HCT116 (cell line): ENCODE measurements at regions of chr17 and their contacts with region 1.

Region 1: DNA sequence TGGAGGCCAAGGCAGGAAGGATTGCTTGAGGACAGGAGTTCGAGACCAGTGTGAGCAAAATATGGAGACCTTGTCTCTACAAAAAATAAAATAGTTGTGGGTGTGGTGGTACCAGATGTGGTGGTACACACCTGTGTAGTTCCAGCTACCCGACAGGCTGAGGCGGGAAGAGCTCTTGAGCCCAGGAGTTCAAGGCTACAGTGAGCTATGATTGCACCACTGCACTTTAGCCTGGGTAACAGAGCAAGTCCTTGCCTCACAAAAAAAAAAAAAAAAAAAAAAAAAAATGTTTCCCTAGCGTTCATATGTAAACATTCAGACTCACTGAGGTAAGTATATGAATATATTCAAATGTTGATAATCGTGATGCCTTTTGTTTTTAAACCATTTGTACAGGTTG is 39.5 kb downstream of the CLUH start:
- DNase-seq: no peak
- ATAC-seq: no peak
- H3K4me3 ChIP-seq: no peak overlapping the region
- H3K27ac ChIP-seq: no peak overlapping the region
- H3K4me1 ChIP-seq: no peaks in the 10 kb centered on the region
- H3K27me3 ChIP-seq: no peaks in the 10 kb centered on the region
- CTCF ChIP-seq: no peak
- POLR2A ChIP-seq: no peak
- RAD21 ChIP-seq: no peak

Region 2: DNA sequence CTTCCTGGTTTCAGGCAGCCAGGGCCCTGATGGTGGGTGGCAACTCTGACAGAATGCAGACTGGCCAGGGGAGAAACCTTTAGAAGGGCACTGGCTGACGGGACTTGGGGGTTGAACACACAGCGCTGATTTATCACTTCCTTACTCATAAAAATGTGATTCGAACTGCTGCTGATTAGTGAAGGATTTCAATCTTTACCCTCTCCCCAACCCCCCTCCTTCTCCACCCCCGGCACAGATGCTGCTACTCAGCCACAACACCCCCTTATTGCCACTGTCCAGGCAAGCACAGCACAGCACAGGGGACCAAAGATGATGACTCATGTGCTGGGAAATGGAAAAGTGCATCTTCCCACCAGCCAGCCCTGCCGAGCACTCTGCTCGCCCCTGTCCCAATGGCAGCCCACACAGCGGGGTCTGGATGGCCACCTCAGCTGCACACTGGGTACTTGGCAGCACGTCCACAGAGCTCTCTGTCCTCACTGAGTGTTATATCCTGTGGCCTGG is 438.5 kb before region 1 on chr17:
- CTCF ChIA-PET with region 1: no interaction called
- POLR2A ChIA-PET with region 1: no interaction called
- RAD21 ChIA-PET with region 1: no interaction called
- intact Hi-C with region 1: no loop called
- DNase-seq: no peak
- ATAC-seq: no peak
- H3K4me3 ChIP-seq: no peak overlapping the region
- H3K27ac ChIP-seq: no peak overlapping the region
- H3K4me1 ChIP-seq: no peaks in the 10 kb centered on the region
- H3K27me3 ChIP-seq: no peaks in the 10 kb centered on the region
- CTCF ChIP-seq: no peak
- POLR2A ChIP-seq: no peak
- RAD21 ChIP-seq: no peak

Region 3: DNA sequence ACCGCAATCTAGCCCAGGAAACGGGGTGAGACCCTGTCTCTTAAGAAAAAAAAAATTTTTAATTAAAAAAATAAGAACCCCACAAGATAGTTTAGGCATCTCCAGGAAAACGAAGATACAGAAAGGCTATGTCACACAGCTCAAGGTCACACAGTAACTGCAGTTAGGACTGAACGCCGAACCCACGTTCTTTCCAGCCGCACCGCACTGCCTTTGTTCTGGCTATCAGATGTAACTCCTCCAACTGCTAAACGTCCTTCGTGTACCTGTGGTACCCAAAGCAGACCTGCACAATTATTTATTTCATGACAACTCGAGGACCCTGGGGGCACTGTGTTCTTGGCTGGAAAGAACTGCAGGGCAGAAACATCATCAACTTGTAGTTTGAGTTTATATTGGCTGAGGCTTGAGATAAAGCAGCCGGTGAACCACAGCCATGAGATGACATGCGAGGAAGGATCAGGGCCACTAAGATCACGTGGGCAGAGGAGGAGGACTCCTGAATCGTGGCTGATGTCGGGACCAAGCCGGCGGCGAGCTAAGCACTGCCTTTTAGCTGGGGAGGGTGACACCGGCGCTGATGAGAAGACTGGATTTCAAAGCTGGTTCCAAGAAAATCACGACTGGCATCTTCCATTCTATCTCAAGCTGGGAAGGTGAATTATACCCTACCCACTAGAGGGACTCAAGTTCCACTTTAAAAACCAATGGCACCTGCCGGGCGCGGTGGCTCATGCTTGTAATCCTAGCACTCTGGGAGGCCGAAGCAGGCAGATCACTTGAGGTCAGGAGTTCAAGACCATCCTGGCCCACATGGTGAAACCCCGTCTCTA is 250.5 kb before region 1 on chr17:
- CTCF ChIA-PET with region 1: no interaction called
- POLR2A ChIA-PET with region 1: interaction called, 3 read pairs
- RAD21 ChIA-PET with region 1: no interaction called
- intact Hi-C with region 1: loop called (anchors 10 kb)
- DNase-seq: no peak
- ATAC-seq: peak; percentile 49; the same call in 1 of the 2 replicates
- H3K4me3 ChIP-seq: no peak overlapping the region
- H3K27ac ChIP-seq: no peak overlapping the region
- H3K4me1 ChIP-seq: no peaks in the 10 kb centered on the region
- H3K27me3 ChIP-seq: no peaks in the 10 kb centered on the region
- CTCF ChIP-seq: peak in 1 of 3 experiments; percentile 18; a peak in 2 of 6 replicates
- POLR2A ChIP-seq: no peak
- RAD21 ChIP-seq: peak; percentile 55

Region 4: GRCh38 chr17:2453325-2453724 is 218.7 kb before region 1 on chr17:
- CTCF ChIA-PET with region 1: no interaction called
- POLR2A ChIA-PET with region 1: no interaction called
- RAD21 ChIA-PET with region 1: no interaction called
- intact Hi-C with region 1: loop called (anchors 10 kb)
- DNase-seq: no peak
- ATAC-seq: no peak
- H3K4me3 ChIP-seq: no peak overlapping the region
- H3K27ac ChIP-seq: no peak overlapping the region
- H3K4me1 ChIP-seq: peaks cover 0 to under 1% of the 10 kb centered on the region in 2 experiments; a peak in 2 of 4 replicates
- H3K27me3 ChIP-seq: no peaks in the 10 kb centered on the region
- CTCF ChIP-seq: no peak
- POLR2A ChIP-seq: no peak
- RAD21 ChIP-seq: no peak

Region 5: GRCh38 chr17:2592971-2593820 is 78.8 kb before region 1 on chr17 and contains the start of gene PAFAH1B1:
- CTCF ChIA-PET with region 1: interaction called, 3 read pairs
- POLR2A ChIA-PET with region 1: no interaction called
- RAD21 ChIA-PET with region 1: no interaction called
- intact Hi-C with region 1: loop called (anchors 10 kb)
- DNase-seq: peak; percentile 56
- ATAC-seq: peak; percentile 89
- H3K4me3 ChIP-seq: peak within 1 kb of the TSS; percentile 73 to 78
- H3K27ac ChIP-seq: peak within 1 kb of the TSS; percentile 98
- H3K4me1 ChIP-seq: peaks cover 18 to 36% of the 10 kb centered on the region in 2 experiments
- H3K27me3 ChIP-seq: no peaks in the 10 kb centered on the region
- CTCF ChIP-seq: no peak
- POLR2A ChIP-seq: peak; percentile 77
- RAD21 ChIP-seq: no peak
- total RNA-seq, gene PAFAH1B1: 113 TPM